HCT116 (cell line): ENCODE measurements at regions of chr11 and their contacts with region 1.

Region 1: DNA sequence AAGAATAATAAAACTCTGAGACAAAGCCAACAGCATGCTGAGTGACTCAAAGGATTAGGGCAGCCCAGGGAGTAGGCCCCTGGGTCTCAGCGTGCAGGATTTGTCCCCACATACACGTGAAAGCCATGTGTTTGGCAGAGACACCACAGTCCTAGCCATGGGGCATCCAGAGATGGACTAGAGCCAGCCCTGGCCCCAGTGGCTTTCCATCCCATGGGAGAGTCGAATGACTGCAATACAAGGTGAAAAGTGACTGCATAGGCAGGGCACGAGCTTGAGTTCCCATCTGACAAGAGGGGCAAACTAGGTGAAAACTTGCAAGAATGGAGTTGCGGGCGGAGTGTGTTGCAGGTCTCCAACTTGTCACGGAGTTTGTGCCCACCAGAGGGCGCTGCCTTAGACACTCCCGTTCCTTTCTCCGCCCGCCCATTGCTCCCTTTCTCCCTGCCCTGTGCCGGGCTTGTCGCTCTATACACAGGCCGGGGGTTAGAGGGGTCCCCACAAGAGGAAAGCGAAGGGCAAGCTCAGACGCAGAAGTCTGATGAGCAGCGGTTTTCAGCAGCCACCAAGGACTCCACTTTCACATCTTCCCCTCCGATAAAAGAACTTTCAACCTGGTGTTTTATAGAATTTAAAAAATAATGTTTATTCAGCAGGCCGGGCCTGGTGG is 24.2 kb downstream of the TSKU start:
- DNase-seq: no peak
- ATAC-seq: peak; percentile 93
- H3K4me3 ChIP-seq: no peak overlapping the region
- H3K27ac ChIP-seq: no peak overlapping the region
- H3K4me1 ChIP-seq: peaks cover 0 to 3% of the 10 kb centered on the region in 2 experiments; a peak in 2 of 4 replicates
- H3K27me3 ChIP-seq: no peaks in the 10 kb centered on the region
- CTCF ChIP-seq: peak; percentile 77 to 83 (median 82)
- POLR2A ChIP-seq: no peak
- RAD21 ChIP-seq: peak; percentile 73

Region 2: GRCh38 chr11:76838678-76839068 is 31.3 kb after region 1 on chr11:
- CTCF ChIA-PET with region 1: interaction called, 4 read pairs
- POLR2A ChIA-PET with region 1: no interaction called
- RAD21 ChIA-PET with region 1: no interaction called
- intact Hi-C with region 1: loop called (anchors 2 kb)
- DNase-seq: no peak
- ATAC-seq: peak; percentile 65
- H3K4me3 ChIP-seq: no peak overlapping the region
- H3K27ac ChIP-seq: no peak overlapping the region
- H3K4me1 ChIP-seq: peaks cover 4 to 23% of the 10 kb centered on the region in 2 experiments; a peak in 3 of 4 replicates
- H3K27me3 ChIP-seq: no peaks in the 10 kb centered on the region
- CTCF ChIP-seq: peak; percentile 41 to 57 (median 42); a peak in 4 of 6 replicates
- POLR2A ChIP-seq: no peak
- RAD21 ChIP-seq: peak; percentile 66

Region 3: DNA sequence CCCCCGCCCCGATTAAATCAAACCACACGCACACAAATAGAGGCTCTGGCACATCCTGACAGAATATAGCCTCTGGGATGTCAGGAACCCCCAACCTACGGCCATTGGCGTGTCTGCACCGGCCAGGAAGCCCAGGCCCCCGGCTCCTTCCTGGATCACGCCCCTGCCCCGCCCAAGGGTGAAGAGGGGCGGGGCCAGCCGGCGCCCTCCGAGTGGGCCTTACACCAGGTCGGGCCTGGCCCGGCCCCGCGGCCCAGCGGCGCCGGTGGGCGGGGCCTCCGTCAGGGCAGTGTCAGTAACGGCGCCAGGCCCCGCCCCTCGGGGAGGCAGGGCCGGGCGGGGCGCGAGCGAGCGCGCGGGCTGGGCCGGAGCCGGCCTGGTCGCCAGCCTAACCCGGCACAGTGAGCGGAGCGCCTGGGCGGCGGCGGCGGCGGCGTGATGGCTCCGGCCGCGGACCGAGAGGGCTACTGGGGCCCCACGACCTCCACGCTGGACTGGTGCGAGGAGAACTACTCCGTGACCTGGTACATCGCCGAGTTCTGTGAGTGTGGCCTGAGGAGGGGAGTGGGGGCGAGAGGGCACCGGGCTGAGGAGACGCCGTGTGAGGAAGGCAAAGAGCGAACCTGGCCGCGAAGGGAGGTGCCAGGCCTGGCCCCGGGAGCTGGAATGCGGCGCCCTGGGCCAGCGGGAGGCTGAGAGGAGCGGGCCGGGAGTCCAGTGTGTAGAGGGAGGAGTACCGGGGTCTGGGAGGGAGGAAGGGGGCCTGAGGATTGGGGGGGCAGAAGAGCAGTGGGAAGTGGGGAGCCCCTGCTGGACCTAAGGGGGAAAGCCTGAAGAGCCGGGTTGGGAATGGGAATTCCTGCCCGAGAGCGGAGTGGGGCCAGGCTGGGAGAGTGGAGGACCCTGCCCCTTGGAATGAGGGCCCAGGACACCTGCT is 53.5 kb after region 1 on chr11 and contains the start of gene ACER3:
- CTCF ChIA-PET with region 1: no interaction called
- POLR2A ChIA-PET with region 1: no interaction called
- RAD21 ChIA-PET with region 1: no interaction called
- intact Hi-C with region 1: loop called (anchors 2 kb)
- DNase-seq: peak; percentile 76
- ATAC-seq: peak; percentile 97
- H3K4me3 ChIP-seq: peak within 1 kb of the TSS; percentile 84 to 97
- H3K27ac ChIP-seq: peak within 1 kb of the TSS; percentile 63
- H3K4me1 ChIP-seq: peaks cover 7 to 16% of the 10 kb centered on the region in 2 experiments
- H3K27me3 ChIP-seq: no peaks in the 10 kb centered on the region
- CTCF ChIP-seq: peak in 1 of 3 experiments; percentile 19; a peak in 2 of 6 replicates
- POLR2A ChIP-seq: peak; percentile 64
- RAD21 ChIP-seq: peak; percentile 9; the same call in 1 of the 2 replicates
- total RNA-seq, gene ACER3: 19.1 TPM

Region 4: GRCh38 chr11:76872959-76873827 is 65.9 kb after region 1 on chr11:
- CTCF ChIA-PET with region 1: no interaction called
- POLR2A ChIA-PET with region 1: no interaction called
- RAD21 ChIA-PET with region 1: no interaction called
- intact Hi-C with region 1: no loop called
- DNase-seq: no peak
- ATAC-seq: no peak
- H3K4me3 ChIP-seq: no peak overlapping the region
- H3K27ac ChIP-seq: no peak overlapping the region
- H3K4me1 ChIP-seq: no peaks in the 10 kb centered on the region
- H3K27me3 ChIP-seq: no peaks in the 10 kb centered on the region
- CTCF ChIP-seq: no peak
- POLR2A ChIP-seq: no peak
- RAD21 ChIP-seq: no peak

Region 5: GRCh38 chr11:77029838-77030237 is 222.5 kb after region 1 on chr11:
- CTCF ChIA-PET with region 1: no interaction called
- POLR2A ChIA-PET with region 1: no interaction called
- RAD21 ChIA-PET with region 1: no interaction called
- intact Hi-C with region 1: loop called (anchors 5 kb)
- DNase-seq: no peak
- ATAC-seq: no peak
- H3K4me3 ChIP-seq: no peak overlapping the region
- H3K27ac ChIP-seq: no peak overlapping the region
- H3K4me1 ChIP-seq: peaks cover 0 to 7% of the 10 kb centered on the region in 2 experiments; a peak in 1 of 4 replicates
- H3K27me3 ChIP-seq: no peaks in the 10 kb centered on the region
- CTCF ChIP-seq: no peak
- POLR2A ChIP-seq: no peak
- RAD21 ChIP-seq: no peak

Region 6: DNA sequence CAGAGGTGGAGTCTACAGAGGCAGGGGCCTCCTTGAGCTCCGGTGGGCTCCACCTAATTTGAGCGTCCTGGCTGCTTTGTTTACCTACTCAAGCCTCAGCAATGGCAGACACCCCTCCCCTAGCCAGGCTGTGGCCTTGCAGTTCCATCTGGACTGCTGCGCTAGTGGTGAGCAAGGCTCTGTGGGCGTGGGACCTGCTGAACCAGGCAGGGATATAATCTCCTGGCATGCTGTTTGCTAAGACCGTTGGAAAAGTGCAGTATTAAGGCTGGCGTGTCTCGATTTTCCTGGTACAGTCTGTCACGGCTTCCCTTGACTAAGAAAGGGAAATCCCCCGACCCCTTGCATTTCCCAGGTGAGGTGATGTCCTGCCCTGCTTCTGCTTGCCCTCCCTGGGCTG is 416.5 kb after region 1 on chr11:
- CTCF ChIA-PET with region 1: no interaction called
- POLR2A ChIA-PET with region 1: no interaction called
- RAD21 ChIA-PET with region 1: no interaction called
- intact Hi-C with region 1: no loop called
- DNase-seq: no peak
- ATAC-seq: no peak
- H3K4me3 ChIP-seq: no peak overlapping the region
- H3K27ac ChIP-seq: no peak overlapping the region
- H3K4me1 ChIP-seq: no peaks in the 10 kb centered on the region
- H3K27me3 ChIP-seq: no peaks in the 10 kb centered on the region
- CTCF ChIP-seq: no peak
- POLR2A ChIP-seq: no peak
- RAD21 ChIP-seq: no peak